ENCODE measurements at regions of chr1 and their contacts with region 1.

Region 1: GRCh38 chr1:53393325-53393792 is 65.5 kb upstream of the LRP8 start:
- DNase-seq: peak; percentile 87
- ATAC-seq: peak; percentile 88
- H3K4me3 Mint-ChIP-seq: no peak overlapping the region
- H3K27ac Mint-ChIP-seq: peak overlapping the region; percentile 55; the same call in 1 of the 2 replicates
- H3K4me1 Mint-ChIP-seq: peaks cover 48% of the 10 kb centered on the region
- H3K27me3 Mint-ChIP-seq: peaks cover 5% of the 10 kb centered on the region; the same call in 1 of the 2 replicates
- CTCF ChIP-seq: peak; percentile 97

Region 2: GRCh38 chr1:53266106-53266505 is 127.3 kb before region 1 on chr1:
- CTCF ChIA-PET with region 1: interaction called, 11 read pairs
- POLR2A ChIA-PET with region 1: no interaction called
- DNase-seq: no peak
- ATAC-seq: peak; percentile 84
- H3K4me3 Mint-ChIP-seq: no peak overlapping the region
- H3K27ac Mint-ChIP-seq: no peak overlapping the region
- H3K4me1 Mint-ChIP-seq: no peaks in the 10 kb centered on the region
- H3K27me3 Mint-ChIP-seq: no peaks in the 10 kb centered on the region
- CTCF ChIP-seq: no peak

Region 3: DNA sequence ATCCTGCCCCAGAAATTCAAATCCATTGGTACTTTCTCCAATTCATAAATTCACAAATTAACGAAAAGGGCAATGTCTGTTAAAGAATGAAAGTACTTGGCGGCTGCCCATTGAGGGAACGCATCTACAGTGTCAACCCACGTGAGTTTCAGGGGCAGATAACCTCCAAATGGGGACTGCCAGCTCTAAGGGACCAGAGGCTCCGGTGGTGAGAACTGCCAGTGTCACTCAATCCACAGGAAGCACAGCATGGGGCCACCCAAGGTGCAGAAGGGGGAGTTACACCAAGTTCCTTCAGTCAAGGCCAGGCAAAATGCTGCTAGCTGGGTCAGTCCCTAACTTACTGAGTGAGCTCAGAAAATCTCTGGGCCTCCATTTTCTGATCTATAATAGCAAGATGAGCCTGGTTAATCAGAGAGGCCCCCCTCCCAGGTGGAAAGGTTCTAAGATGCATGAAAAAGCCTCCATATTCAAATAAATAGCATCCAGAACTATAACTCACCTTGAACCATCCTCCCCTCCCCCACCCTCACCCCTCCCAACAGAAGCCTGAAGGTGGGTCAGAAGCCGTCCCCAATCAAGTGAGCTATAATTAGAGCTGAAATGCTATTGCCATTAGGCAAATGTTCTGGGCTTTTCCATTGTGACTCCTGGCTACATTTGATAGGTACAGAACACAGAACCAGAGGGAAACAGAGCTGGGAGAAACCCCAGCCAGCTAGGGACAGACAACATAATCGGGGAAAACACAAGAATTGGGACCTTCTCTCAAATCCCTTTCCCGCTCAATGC is 107.2 kb before region 1 on chr1:
- CTCF ChIA-PET with region 1: interaction called, 16 read pairs
- POLR2A ChIA-PET with region 1: no interaction called
- DNase-seq: no peak
- ATAC-seq: no peak
- H3K4me3 Mint-ChIP-seq: no peak overlapping the region
- H3K27ac Mint-ChIP-seq: no peak overlapping the region
- H3K4me1 Mint-ChIP-seq: peaks cover 24% of the 10 kb centered on the region
- H3K27me3 Mint-ChIP-seq: no peaks in the 10 kb centered on the region
- CTCF ChIP-seq: no peak

Region 4: DNA sequence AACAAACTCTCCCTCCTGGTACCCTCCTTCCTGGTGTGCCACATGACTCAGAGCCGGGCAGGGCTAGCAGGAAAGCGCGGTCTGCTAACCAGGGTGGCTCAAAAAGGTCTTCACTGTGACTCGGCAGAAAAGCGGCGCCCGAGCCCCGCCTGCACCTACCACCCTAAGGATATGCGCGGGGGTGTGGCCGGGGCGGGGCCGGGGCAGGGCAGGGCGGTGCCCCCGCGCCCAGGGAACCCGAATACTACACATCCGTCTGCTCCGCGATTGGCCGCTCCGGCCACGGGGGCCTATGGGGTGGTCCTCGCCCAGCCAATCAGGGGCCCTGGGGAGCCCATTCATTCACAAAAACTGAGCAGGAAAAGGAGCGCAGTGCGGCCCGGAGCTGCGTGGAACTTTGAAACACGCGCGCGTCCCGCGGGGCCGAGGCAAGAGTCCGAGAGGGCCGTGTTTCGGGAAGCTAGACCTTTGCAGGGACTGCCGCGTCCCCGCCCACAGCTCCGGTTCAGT is 67.2 kb before region 1 on chr1:
- CTCF ChIA-PET with region 1: interaction called, 15 read pairs
- POLR2A ChIA-PET with region 1: interaction called, 3 read pairs
- DNase-seq: peak; percentile 97
- ATAC-seq: peak; percentile 88
- H3K4me3 Mint-ChIP-seq: peak overlapping the region; percentile 88
- H3K27ac Mint-ChIP-seq: peak overlapping the region; percentile 96
- H3K4me1 Mint-ChIP-seq: peaks cover 35% of the 10 kb centered on the region
- H3K27me3 Mint-ChIP-seq: peaks cover 3% of the 10 kb centered on the region; the same call in 1 of the 2 replicates
- CTCF ChIP-seq: no peak

Region 5: GRCh38 chr1:53368305-53369033 is 24.9 kb before region 1 on chr1:
- CTCF ChIA-PET with region 1: interaction called, 10 read pairs
- POLR2A ChIA-PET with region 1: no interaction called
- DNase-seq: no peak
- ATAC-seq: no peak
- H3K4me3 Mint-ChIP-seq: no peak overlapping the region
- H3K27ac Mint-ChIP-seq: no peak overlapping the region
- H3K4me1 Mint-ChIP-seq: no peaks in the 10 kb centered on the region
- H3K27me3 Mint-ChIP-seq: peaks cover 32% of the 10 kb centered on the region
- CTCF ChIP-seq: no peak

Region 6: GRCh38 chr1:53442299-53442698 is 48.9 kb after region 1 on chr1:
- CTCF ChIA-PET with region 1: interaction called, 17 read pairs
- POLR2A ChIA-PET with region 1: no interaction called
- DNase-seq: no peak
- ATAC-seq: peak; percentile 73
- H3K4me3 Mint-ChIP-seq: no peak overlapping the region
- H3K27ac Mint-ChIP-seq: peak overlapping the region; percentile 70
- H3K4me1 Mint-ChIP-seq: peaks cover 44% of the 10 kb centered on the region
- H3K27me3 Mint-ChIP-seq: peaks cover 13% of the 10 kb centered on the region; the same call in 1 of the 2 replicates
- CTCF ChIP-seq: no peak

Measured in WTC11 (cell line).